Gastrocnemius medialis (tissue), 4 donors: ENCODE measurements at regions of chr7 and their contacts with region 1.

Region 1: DNA sequence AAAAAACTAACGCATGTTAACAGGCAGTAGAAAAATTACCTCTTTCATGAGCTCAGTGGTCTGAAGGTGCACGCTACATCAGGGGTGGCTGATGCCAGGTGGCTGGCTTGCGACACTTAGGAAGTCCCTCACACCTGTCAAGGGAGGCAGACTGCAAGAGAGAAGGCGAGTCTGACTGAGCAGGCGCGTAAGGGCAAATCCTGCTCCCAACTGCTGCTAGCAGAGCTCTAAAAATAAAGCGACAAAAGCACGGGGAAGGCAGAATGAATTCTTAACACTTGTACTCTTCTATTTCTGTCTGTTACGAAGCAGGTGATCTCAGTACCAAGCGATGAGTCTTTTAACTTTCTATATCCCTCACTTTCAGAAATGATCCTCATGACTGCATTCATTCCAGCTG is 33.1 kb downstream of the CACNA2D1 start:
- DNase-seq: peak; percentile 82 to 94
- ATAC-seq: peak; percentile 98 to 99
- H3K4me3 ChIP-seq: peak overlapping the region; percentile 16 to 44 (median 32)
- H3K27ac ChIP-seq: peak overlapping the region; percentile 88 to 94 (median 92)
- H3K4me1 ChIP-seq: peaks cover 41 to 56% of the 10 kb centered on the region in 2 donors
- H3K27me3 ChIP-seq: no peaks in the 10 kb centered on the region
- CTCF ChIP-seq: no peak
- POLR2A ChIP-seq: peak in 1 of 2 donors; percentile 66

Region 2: GRCh38 chr7:80604436-80604835 is 1806.0 kb before region 1 on chr7:
- in situ Hi-C with region 1: no loop called
- intact Hi-C with region 1: loop called (anchors 10 kb)
- DNase-seq: no peak
- ATAC-seq: peak; percentile 53 to 72
- H3K4me3 ChIP-seq: peak overlapping the region in 3 of 4 donors; percentile 12 to 48 (median 12)
- H3K27ac ChIP-seq: peak overlapping the region; percentile 80 to 87 (median 84)
- H3K4me1 ChIP-seq: peaks cover 52 to 76% of the 10 kb centered on the region in 2 donors
- H3K27me3 ChIP-seq: no peaks in the 10 kb centered on the region
- CTCF ChIP-seq: no peak
- POLR2A ChIP-seq: peak in 1 of 2 donors; percentile 12

Region 3: DNA sequence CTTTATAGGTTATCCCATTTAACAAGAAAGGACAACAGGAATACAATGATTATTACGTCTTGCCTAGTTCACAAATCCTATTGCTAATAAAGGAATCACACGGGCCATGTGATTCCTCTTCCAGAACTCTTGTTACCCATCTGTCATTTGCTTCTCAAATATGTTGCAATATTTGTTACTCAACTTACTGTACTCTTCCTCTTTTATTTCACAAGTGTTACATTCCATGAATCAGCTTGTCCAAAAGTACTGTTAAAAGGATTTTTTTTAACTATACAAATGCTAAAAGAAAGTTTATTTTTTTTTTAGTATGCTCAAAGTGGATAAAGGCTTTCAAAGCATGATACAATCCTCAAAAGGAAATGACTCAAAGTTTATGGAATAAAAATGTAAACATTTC is 1776.0 kb before region 1 on chr7:
- in situ Hi-C with region 1: loop called in 1 of 4 experiments (anchors 25 kb)
- intact Hi-C with region 1: no loop called
- DNase-seq: no peak
- ATAC-seq: peak; percentile 80 to 86
- H3K4me3 ChIP-seq: no peak overlapping the region
- H3K27ac ChIP-seq: peak overlapping the region; percentile 82 to 92 (median 86)
- H3K4me1 ChIP-seq: peaks cover 62 to 68% of the 10 kb centered on the region in 2 donors
- H3K27me3 ChIP-seq: no peaks in the 10 kb centered on the region
- CTCF ChIP-seq: no peak
- POLR2A ChIP-seq: no peak

Region 4: GRCh38 chr7:82204694-82205093 is 205.8 kb before region 1 on chr7:
- in situ Hi-C with region 1: no loop called
- intact Hi-C with region 1: loop called (anchors 2 kb)
- DNase-seq: peak; percentile 98 to 99
- ATAC-seq: peak; percentile 98 to 99
- H3K4me3 ChIP-seq: no peak overlapping the region
- H3K27ac ChIP-seq: peak overlapping the region; percentile 83 to 92 (median 88)
- H3K4me1 ChIP-seq: peaks cover 47% of the 10 kb centered on the region in 2 donors
- H3K27me3 ChIP-seq: no peaks in the 10 kb centered on the region
- CTCF ChIP-seq: no peak
- POLR2A ChIP-seq: no peak

Region 5: GRCh38 chr7:82335927-82336326 is 74.5 kb before region 1 on chr7:
- in situ Hi-C with region 1: no loop called
- intact Hi-C with region 1: no loop called
- DNase-seq: no peak
- ATAC-seq: peak in 1 of 2 donors; percentile 42
- H3K4me3 ChIP-seq: no peak overlapping the region
- H3K27ac ChIP-seq: peak overlapping the region in 1 of 4 donors; percentile 23
- H3K4me1 ChIP-seq: peaks cover 5 to 11% of the 10 kb centered on the region in 2 donors
- H3K27me3 ChIP-seq: no peaks in the 10 kb centered on the region
- CTCF ChIP-seq: no peak
- POLR2A ChIP-seq: no peak